ENCODE measurements at regions of chr9 and their contacts with region 1.

Region 1: DNA sequence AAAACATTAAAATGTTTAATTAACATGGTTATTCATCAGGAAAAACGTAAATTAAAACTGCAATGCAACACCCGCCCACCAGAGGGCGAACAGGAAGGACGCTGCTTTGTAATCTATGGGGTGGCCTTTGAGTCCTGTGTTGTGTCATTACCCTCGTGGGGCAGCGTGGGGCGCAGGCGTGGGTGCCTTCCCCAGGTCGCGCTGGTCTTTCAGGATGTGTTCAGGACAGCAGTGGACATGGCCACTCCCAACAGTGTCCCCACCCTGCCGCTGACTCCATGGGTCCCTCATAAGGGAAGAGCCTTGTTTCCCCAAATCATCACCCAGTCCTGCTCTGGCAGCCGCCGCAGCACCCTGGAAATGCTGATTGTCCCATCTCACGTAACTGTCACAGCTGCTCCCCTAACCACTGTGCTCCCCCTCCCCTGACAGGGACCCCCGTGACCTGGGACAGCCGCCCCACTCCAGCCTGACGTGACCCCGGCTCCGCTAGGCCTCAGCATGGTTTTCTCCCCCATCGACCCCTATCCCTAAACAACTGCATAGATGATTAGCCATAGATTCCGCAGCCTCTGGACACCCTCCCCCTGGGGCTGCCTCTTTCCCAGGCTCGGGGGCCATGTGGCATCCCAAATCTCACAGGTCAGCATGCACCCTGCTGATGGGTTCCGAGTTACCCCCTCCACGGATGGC is 36.4 kb downstream of the GLT6D1 start:
- DNase-seq: peak; percentile 27
- ATAC-seq: peak; percentile 65
- H3K4me3 ChIP-seq: no peak overlapping the region
- H3K27ac ChIP-seq: no peak overlapping the region
- H3K4me1 ChIP-seq: no peaks in the 10 kb centered on the region
- H3K27me3 ChIP-seq: no peaks in the 10 kb centered on the region; the same call in none of the 2 replicates
- CTCF ChIP-seq: peak; percentile 74
- POLR2A ChIP-seq: no peak
- RAD21 ChIP-seq: peak; percentile 25; the same call in 1 of the 2 replicates

Region 2: DNA sequence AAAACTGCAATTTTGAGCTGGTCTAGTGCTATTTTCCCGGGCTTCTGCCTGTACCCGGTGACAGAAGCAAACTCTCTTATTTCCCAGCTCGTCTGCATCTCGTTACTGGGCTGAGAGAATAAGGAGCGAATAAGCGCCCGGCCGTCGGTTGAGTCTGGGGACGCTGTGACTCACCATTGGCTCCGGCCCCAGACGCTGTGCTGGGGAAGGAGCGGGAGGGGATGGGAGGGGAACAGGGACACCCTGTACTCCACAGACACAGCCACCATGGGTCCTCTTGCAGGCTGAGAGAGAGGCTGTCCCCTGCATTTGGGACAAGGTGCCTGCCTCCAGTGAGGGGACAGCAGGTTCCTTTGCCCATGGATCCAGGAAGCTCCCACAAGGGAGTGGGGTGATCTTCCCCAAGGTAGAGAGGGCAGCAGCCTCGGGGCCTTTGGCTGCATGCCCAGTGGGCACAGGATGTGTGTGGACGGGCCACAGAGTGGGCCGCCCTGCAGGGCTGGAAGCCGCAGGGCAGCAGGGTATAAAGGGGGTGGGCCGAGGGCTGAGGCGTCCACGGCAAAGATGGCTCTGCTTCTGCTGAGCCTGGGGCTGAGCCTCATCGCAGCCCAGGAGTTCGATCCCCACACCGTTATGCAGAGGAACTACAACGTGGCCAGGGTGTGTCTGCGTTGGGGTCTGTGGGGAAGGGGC is 60.0 kb after region 1 on chr9 and contains the start of gene LCN9:
- CTCF ChIA-PET with region 1: no interaction called
- POLR2A ChIA-PET with region 1: no interaction called
- dilution Hi-C with region 1: no loop called
- in situ Hi-C with region 1: no loop called
- intact Hi-C with region 1: no loop called
- DNase-seq: no peak
- ATAC-seq: no peak
- H3K4me3 ChIP-seq: no peak within 1 kb of the TSS
- H3K27ac ChIP-seq: no peak within 1 kb of the TSS
- H3K4me1 ChIP-seq: no peaks in the 10 kb centered on the region
- H3K27me3 ChIP-seq: no peaks in the 10 kb centered on the region
- CTCF ChIP-seq: no peak
- POLR2A ChIP-seq: no peak
- RAD21 ChIP-seq: no peak
- total RNA-seq, gene LCN9: not detected in 2 replicates

Region 3: DNA sequence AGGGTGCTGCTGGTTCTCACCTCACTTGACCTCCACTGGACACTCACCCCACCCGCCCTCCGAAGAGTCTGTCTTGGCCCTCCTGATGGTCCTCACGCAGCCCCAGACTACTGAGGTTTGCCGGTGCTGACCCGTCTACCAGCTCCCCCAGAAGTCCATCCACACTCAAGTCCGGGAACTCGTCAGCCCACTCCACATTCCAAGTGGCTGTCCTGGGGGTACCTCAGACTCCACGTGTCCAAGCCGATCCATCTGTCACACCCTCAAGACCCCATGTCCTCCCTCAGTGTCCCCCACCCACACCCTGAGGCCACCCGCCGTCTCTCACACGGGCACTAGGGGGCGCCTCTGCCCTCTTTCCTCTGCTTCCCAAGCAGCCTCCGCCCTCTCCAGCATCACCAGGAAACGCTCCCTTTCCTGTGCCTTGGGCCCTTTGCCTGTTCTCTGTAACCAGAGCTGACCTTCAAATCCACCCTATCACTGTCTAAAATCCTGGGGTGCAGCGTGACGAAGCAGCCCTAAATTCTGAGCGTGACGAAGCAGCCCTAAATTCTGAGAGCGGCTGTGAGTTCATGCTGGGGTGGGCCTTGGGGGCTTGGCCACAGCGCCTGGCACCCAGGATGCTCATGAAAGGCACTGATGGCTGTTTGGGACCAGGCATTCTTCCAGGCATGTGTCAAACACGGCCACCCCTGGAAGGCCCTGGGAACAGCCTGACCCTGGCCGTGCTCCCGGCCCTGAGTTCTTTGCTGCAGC is 194.8 kb after region 1 on chr9:
- CTCF ChIA-PET with region 1: no interaction called
- POLR2A ChIA-PET with region 1: no interaction called
- dilution Hi-C with region 1: no loop called
- in situ Hi-C with region 1: no loop called
- intact Hi-C with region 1: loop called (anchors 10 kb)
- DNase-seq: peak; percentile 31
- ATAC-seq: peak; percentile 94
- H3K4me3 ChIP-seq: no peak overlapping the region
- H3K27ac ChIP-seq: no peak overlapping the region
- H3K4me1 ChIP-seq: no peaks in the 10 kb centered on the region
- H3K27me3 ChIP-seq: peaks cover 9% of the 10 kb centered on the region
- CTCF ChIP-seq: peak; percentile 66
- POLR2A ChIP-seq: no peak
- RAD21 ChIP-seq: peak; percentile 65

Region 4: GRCh38 chr9:135926402-135927194 is 323.7 kb after region 1 on chr9:
- CTCF ChIA-PET with region 1: no interaction called
- POLR2A ChIA-PET with region 1: no interaction called
- dilution Hi-C with region 1: no loop called
- in situ Hi-C with region 1: loop called (anchors 25 kb)
- intact Hi-C with region 1: no loop called
- DNase-seq: peak; percentile 61
- ATAC-seq: peak; percentile 58
- H3K4me3 ChIP-seq: no peak overlapping the region
- H3K27ac ChIP-seq: no peak overlapping the region
- H3K4me1 ChIP-seq: no peaks in the 10 kb centered on the region
- H3K27me3 ChIP-seq: no peaks in the 10 kb centered on the region
- CTCF ChIP-seq: no peak
- POLR2A ChIP-seq: no peak
- RAD21 ChIP-seq: no peak

Region 5: DNA sequence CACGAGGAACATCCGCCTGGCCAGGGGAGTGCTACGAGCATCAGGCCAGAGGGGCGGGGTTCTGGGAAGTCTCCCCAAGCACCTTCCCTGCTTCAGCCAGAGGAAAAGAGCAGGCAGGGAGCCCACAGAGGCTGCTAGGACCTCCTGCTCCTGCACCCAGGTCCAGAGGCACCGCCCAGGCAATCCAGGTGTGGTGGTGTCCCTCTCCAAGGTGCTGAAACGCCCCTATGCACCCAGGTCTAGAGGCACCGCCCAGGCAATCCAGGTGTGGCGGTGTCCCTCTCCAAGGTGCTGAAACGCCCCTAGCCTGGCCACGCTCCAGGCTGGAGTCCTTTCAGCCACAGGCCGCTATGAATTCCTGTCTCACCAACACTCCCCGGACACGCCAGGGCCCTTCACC is 369.0 kb after region 1 on chr9:
- CTCF ChIA-PET with region 1: no interaction called
- POLR2A ChIA-PET with region 1: no interaction called
- dilution Hi-C with region 1: no loop called
- in situ Hi-C with region 1: no loop called
- intact Hi-C with region 1: loop called (anchors 1 kb)
- DNase-seq: no peak
- ATAC-seq: no peak
- H3K4me3 ChIP-seq: no peak overlapping the region
- H3K27ac ChIP-seq: no peak overlapping the region
- H3K4me1 ChIP-seq: peaks cover 6% of the 10 kb centered on the region; the same call in 1 of the 2 replicates
- H3K27me3 ChIP-seq: peaks cover 9% of the 10 kb centered on the region; the same call in 1 of the 2 replicates
- CTCF ChIP-seq: no peak
- POLR2A ChIP-seq: no peak
- RAD21 ChIP-seq: no peak

Region 6: GRCh38 chr9:136267261-136268111 is 664.6 kb after region 1 on chr9:
- CTCF ChIA-PET with region 1: no interaction called
- POLR2A ChIA-PET with region 1: no interaction called
- dilution Hi-C with region 1: no loop called
- in situ Hi-C with region 1: no loop called
- intact Hi-C with region 1: loop called (anchors 5 kb)
- DNase-seq: peak; percentile 78
- ATAC-seq: peak; percentile 99
- H3K4me3 ChIP-seq: peak overlapping the region; percentile 47
- H3K27ac ChIP-seq: peak overlapping the region; percentile 41; the same call in 1 of the 2 replicates
- H3K4me1 ChIP-seq: peaks cover 3% of the 10 kb centered on the region; the same call in 1 of the 2 replicates
- H3K27me3 ChIP-seq: peaks cover 17% of the 10 kb centered on the region
- CTCF ChIP-seq: peak; percentile 43
- POLR2A ChIP-seq: no peak; the same call in 1 of the 2 replicates
- RAD21 ChIP-seq: peak; percentile 45